ENCODE measurements at regions of chr6 and their contacts with region 1.

Region 1: GRCh38 chr6:110528101-110528929 is 51.9 kb upstream of the SLC22A16 start:
- DNase-seq: peak; percentile 96
- H3K4me3 ChIP-seq: no peak overlapping the region
- H3K27me3 ChIP-seq: no peaks in the 10 kb centered on the region
- CTCF ChIP-seq: peak; percentile 68

Region 2: GRCh38 chr6:110746680-110747079 is 218.4 kb after region 1 on chr6:
- CTCF ChIA-PET with region 1: no interaction called
- POLR2A ChIA-PET with region 1: no interaction called
- DNase-seq: no peak
- H3K4me3 ChIP-seq: no peak overlapping the region
- H3K27me3 ChIP-seq: no peaks in the 10 kb centered on the region
- CTCF ChIP-seq: no peak

Region 3: GRCh38 chr6:110873981-110874879 is 345.9 kb after region 1 on chr6 and contains the start of gene AMD1:
- CTCF ChIA-PET with region 1: interaction called, 23 read pairs
- POLR2A ChIA-PET with region 1: interaction called, 3 read pairs
- DNase-seq: peak; percentile 78
- H3K4me3 ChIP-seq: peak within 1 kb of the TSS; percentile 93
- H3K27me3 ChIP-seq: no peaks in the 10 kb centered on the region
- CTCF ChIP-seq: no peak
- polyA plus RNA-seq, gene AMD1: 25.9 and 52.7 TPM in 2 replicates

Region 4: GRCh38 chr6:110949679-110950285 is 421.5 kb after region 1 on chr6:
- CTCF ChIA-PET with region 1: interaction called, 32 read pairs
- POLR2A ChIA-PET with region 1: no interaction called
- DNase-seq: no peak
- H3K4me3 ChIP-seq: no peak overlapping the region
- H3K27me3 ChIP-seq: no peaks in the 10 kb centered on the region
- CTCF ChIP-seq: peak; percentile 47

Region 5: GRCh38 chr6:110981202-110981600 is 452.9 kb after region 1 on chr6:
- CTCF ChIA-PET with region 1: interaction called, 14 read pairs
- POLR2A ChIA-PET with region 1: no interaction called
- DNase-seq: no peak
- H3K4me3 ChIP-seq: peak overlapping the region; percentile 88
- H3K27me3 ChIP-seq: no peaks in the 10 kb centered on the region
- CTCF ChIP-seq: no peak

Measured in BJ (cell line).